GM13976 (cell line): ENCODE measurements at regions of chr7 and their contacts with region 1.

Region 1: GRCh38 chr7:119935418-119936025 is 337.5 kb upstream of the KCND2 start:
- DNase-seq: peak; percentile 12
- CTCF ChIP-seq: peak; percentile 36

Region 2: GRCh38 chr7:120725376-120726039 is 790.0 kb after region 1 on chr7:
- in situ Hi-C with region 1: loop called (anchors 25 kb)
- DNase-seq: peak; percentile 18
- CTCF ChIP-seq: peak; percentile 42